ENCODE measurements at regions of chr16 and their contacts with region 1.

Region 1: DNA sequence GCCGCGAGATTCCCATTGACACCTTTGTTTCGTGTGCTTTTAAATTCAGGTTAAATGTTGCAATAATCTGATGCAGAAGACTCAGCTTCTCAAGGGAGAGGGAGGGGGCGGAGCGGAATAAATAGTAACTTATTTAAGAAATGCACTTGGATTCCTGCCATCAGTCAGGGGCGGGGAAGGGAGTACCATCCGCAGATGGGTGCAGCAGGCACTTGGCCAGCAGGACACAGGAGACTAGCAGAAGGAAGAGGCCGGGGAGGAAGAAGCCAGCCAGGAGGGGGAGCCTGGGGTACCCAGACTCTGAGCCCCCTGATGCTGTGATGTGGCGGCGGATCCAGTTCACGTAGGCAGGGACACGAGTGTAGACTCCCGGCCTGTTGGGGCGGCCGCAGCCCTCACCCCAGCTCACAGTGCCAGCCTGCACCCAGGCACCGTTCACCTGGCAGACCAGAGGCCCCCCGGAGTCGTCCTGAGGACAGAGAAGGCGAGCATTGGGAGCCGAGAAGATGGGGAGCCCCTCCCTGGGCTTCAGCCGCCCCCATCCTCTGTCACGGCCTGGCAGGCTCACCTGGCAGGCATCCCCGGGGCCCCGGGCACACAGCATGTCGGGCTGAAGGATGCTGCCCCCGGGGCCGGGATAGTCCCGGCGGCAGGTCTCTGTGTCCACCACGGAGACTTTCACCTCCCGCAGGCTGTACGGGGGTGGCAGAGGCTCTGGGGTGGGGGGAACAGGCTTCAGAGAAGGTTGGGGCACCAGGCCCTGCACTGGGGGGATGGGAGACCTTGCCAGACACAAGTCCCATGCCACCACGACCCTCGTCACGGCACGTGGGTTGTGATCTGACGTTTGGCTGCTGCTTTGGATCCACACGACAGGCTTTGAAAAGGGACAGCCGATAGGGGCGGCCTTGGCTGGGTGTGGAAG is 3.2 kb downstream of the TPSG1 start:
- DNase-seq: no peak
- ATAC-seq: no peak
- H3K4me3 ChIP-seq: no peak overlapping the region
- H3K4me3 Mint-ChIP-seq: no peak overlapping the region
- H3K27ac ChIP-seq: no peak overlapping the region
- H3K27ac Mint-ChIP-seq: no peak overlapping the region
- H3K4me1 ChIP-seq: no peaks in the 10 kb centered on the region
- H3K4me1 Mint-ChIP-seq: no peaks in the 10 kb centered on the region
- H3K27me3 ChIP-seq: peaks cover 0 to 2% of the 10 kb centered on the region in 2 experiments
- H3K27me3 Mint-ChIP-seq: peaks cover 4% of the 10 kb centered on the region
- CTCF ChIP-seq: no peak

Region 2: DNA sequence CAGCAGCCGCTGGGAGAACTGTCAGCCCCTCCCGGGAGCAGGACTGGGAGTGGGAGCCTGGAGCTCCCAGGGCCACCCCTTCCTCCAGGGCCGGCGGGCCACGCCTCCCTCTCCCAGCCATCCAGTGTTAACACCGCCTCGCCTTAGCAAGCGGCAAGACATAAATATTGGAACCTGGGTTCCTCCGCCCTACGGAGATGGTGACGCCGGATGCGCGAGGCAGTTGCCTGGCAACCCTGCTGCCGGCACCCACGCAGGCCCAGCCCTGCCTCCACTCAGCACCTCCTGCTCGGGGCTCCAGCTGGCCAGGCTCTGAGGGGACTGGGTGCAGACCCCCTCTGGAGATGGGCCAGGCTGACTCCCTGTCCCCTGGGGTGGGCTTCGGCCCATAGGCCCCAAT is 96.4 kb before region 1 on chr16:
- CTCF ChIA-PET with region 1: no interaction called
- POLR2A ChIA-PET with region 1: no interaction called
- intact Hi-C with region 1: no loop called
- DNase-seq: peak in 3 of 14 experiments; percentile 6 to 21 (median 18)
- ATAC-seq: peak; percentile 72
- H3K4me3 ChIP-seq: no peak overlapping the region
- H3K4me3 Mint-ChIP-seq: no peak overlapping the region
- H3K27ac ChIP-seq: no peak overlapping the region
- H3K27ac Mint-ChIP-seq: no peak overlapping the region
- H3K4me1 ChIP-seq: peaks cover 8% of the 10 kb centered on the region
- H3K4me1 Mint-ChIP-seq: no peaks in the 10 kb centered on the region
- H3K27me3 ChIP-seq: no peaks in the 10 kb centered on the region
- H3K27me3 Mint-ChIP-seq: no peaks in the 10 kb centered on the region
- CTCF ChIP-seq: no peak

Region 3: GRCh38 chr16:1245432-1246020 is 23.6 kb after region 1 on chr16:
- CTCF ChIA-PET with region 1: no interaction called
- POLR2A ChIA-PET with region 1: no interaction called
- intact Hi-C with region 1: loop called in 1 of 2 experiments (anchors 2 kb)
- DNase-seq: peak in 1 of 14 experiments; percentile 2
- ATAC-seq: no peak
- H3K4me3 ChIP-seq: no peak overlapping the region
- H3K4me3 Mint-ChIP-seq: no peak overlapping the region
- H3K27ac ChIP-seq: no peak overlapping the region
- H3K27ac Mint-ChIP-seq: no peak overlapping the region
- H3K4me1 ChIP-seq: peaks cover 4% of the 10 kb centered on the region
- H3K4me1 Mint-ChIP-seq: peaks cover 7% of the 10 kb centered on the region
- H3K27me3 ChIP-seq: peaks cover 0 to 3% of the 10 kb centered on the region in 2 experiments
- H3K27me3 Mint-ChIP-seq: peaks cover 32% of the 10 kb centered on the region
- CTCF ChIP-seq: no peak